Activated T-helper 2 cell treated with anti-CD3 and anti-CD28 coated beads, Interferon-gamma antibody, Interleukin-2, Interleukin-4, amounts not matched to agents 10 μg/mL and 5 μg/mL and 100 μg/mL, durations not matched to agents 14 hours and 24 hours and 36 hours (primary cell): ENCODE measurements at regions of chr13 and their contacts with region 1.

Region 1: DNA sequence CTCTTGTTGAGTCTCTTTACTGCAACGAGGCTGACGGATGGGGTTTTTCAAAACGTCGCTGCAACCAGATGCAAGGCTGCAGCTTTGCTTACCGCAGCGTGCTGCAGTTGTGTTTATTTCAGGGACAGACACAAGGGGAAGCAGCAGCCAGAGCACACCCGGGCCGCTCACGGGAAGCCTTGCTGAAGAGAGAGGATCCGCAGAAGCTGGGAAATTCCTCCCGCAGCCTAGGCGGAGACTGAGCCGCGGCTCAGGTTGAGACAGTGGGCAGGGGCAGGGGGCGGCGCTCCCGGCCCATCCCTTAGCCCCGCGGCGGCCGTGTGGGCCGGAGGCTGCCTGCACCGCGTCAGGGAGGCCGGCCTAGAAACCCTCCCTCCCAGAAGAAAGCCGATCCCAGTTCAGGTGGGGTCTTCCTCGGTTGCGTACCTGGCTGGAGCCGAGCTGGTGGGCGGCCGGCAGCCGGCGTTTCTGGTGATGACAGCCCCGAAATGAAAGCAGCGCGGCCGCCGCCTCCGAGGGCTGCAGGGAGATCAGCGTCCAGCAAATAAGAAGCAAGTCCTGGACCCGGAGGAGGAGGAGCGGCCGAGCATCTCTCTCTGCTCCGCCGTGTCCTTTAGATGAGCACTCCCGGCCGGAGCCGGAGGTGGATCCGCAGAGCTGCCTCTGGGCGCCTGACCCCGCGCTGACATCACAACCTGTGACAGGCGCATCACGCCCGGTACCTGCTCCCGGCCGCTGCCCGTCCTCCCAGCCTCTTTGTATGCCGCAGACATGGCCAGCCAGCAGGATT is at the start of gene FRY:
- DNase-seq: peak; percentile 31
- H3K4me3 Mint-ChIP-seq: peak within 1 kb of the TSS; percentile 94
- H3K27ac Mint-ChIP-seq: peak within 1 kb of the TSS; percentile 89
- H3K4me1 Mint-ChIP-seq: peaks cover 49% of the 10 kb centered on the region
- H3K27me3 Mint-ChIP-seq: peaks cover 5% of the 10 kb centered on the region
- total RNA-seq, gene FRY: 3.7 and 7.4 TPM in 2 replicates

Region 2: DNA sequence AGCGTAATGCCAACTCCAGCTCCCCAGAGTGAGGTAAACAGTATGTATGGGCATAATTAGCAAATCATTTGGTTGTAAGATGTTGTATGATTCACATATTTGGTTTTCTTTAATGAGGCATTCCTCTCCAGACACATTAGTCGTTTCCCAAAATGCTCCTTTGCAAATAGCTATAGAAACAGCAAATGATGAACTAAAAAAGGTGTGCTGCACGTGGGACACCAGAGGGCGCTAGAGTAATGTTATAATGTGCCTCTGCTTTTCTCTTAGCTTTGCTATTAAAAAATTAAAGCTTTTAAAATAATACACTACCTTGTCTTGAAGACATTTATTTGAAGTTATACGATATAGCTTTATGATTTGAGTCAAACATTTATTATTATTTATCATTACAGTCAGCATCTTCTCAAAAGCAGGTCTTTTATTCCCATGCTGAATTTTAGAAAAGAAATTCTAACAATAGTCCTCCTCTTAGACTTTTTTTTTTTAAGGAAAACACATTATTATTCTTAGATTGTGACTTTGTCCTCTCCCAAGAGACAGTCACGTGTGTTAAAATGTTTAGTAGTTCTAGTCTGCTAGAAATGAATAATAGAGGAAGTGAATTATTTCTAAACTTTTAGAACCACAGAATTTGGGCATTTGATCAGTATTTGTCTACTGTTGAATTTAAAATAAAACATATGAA is 121.2 kb before region 1 on chr13:
- intact Hi-C with region 1: loop called (anchors 10 kb)
- DNase-seq: peak; percentile 38
- H3K4me3 Mint-ChIP-seq: no peak overlapping the region
- H3K27ac Mint-ChIP-seq: no peak overlapping the region
- H3K4me1 Mint-ChIP-seq: peaks cover 22% of the 10 kb centered on the region
- H3K27me3 Mint-ChIP-seq: peaks cover 23% of the 10 kb centered on the region

Region 3: DNA sequence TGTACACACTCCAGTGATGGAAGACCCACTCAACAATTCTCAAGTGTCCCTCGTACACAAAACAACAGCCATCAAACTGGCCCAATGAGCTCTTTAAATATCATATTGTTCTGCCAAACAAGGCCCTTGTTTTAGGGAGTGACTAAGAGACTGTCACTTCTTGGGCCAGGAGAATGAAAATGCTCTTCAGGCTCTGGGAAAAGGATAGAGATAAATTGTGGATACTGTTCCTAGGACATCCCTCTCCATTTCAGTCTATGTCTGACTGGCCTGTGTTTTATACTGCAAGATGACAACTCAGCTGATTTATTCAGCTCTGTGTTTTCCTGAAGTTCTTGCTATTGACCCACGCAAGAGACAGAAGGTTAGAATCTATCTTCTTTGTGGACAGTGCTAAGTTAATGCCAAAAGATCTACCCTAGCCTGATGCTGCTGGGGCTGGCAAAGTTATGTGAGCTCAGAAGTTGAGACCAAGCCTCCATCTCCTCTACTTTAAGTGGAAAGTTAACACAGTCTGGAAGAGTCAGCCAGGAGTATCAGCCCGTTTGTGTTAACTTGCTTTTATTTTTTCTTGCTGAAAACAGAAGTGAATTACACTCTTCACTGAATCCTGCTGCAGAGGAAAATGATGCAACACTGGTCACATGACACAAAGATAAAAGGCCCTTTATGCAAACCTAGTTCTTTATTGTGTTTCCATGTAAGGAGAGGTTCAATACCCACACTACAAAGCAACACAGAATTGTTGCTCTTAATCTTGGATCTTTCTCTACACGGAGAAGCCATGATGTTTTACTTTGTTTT is 15.0 kb after region 1 on chr13:
- intact Hi-C with region 1: loop called (anchors 2 kb)
- DNase-seq: no peak
- H3K4me3 Mint-ChIP-seq: peak overlapping the region; percentile 5
- H3K27ac Mint-ChIP-seq: peak overlapping the region; percentile 67
- H3K4me1 Mint-ChIP-seq: peaks cover 64% of the 10 kb centered on the region
- H3K27me3 Mint-ChIP-seq: no peaks in the 10 kb centered on the region

Region 4: DNA sequence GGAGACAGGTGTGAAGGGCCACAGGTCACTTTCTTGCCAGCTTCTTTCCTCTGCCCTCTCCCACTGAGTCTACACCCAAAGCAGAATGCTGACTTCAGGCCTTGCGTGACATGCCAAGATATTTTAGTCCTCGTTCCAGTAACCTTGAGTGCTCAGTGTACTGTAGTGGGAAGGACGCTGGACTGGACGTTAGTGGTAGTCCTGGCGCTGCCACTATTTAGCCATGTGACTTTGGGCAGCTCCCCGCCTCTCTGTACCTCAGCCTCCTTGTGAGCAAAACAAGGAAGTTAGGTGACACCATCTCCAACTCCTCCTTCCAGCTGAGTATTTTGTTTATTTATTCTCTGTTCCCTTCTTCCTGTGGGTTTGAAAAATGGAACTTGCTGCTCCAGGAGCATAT is 86.5 kb after region 1 on chr13:
- intact Hi-C with region 1: loop called (anchors 5 kb)
- DNase-seq: no peak
- H3K4me3 Mint-ChIP-seq: no peak overlapping the region
- H3K27ac Mint-ChIP-seq: no peak overlapping the region
- H3K4me1 Mint-ChIP-seq: peaks cover 40% of the 10 kb centered on the region
- H3K27me3 Mint-ChIP-seq: no peaks in the 10 kb centered on the region

Region 5: DNA sequence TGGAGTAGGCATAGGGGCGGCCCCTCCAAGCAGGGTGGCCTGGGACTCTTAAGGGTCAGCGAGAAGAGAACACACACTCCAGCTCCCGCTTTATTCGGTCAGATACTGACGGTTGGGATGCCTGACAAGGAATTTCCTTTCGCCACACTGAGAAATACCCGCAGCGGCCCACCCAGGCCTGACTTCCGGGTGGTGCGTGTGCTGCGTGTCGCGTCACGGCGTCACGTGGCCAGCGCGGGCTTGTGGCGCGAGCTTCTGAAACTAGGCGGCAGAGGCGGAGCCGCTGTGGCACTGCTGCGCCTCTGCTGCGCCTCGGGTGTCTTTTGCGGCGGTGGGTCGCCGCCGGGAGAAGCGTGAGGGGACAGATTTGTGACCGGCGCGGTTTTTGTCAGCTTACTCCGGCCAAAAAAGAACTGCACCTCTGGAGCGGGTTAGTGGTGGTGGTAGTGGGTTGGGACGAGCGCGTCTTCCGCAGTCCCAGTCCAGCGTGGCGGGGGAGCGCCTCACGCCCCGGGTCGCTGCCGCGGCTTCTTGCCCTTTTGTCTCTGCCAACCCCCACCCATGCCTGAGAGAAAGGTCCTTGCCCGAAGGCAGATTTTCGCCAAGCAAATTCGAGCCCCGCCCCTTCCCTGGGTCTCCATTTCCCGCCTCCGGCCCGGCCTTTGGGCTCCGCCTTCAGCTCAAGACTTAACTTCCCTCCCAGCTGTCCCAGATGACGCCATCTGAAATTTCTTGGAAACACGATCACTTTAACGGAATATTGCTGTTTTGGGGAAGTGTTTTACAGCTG is 284.2 kb after region 1 on chr13 and contains the starts of genes BRCA2 and ZAR1L:
- intact Hi-C with region 1: loop called (anchors 1 kb)
- DNase-seq: peak; percentile 85
- H3K4me3 Mint-ChIP-seq: peak within 1 kb of the TSS; percentile 96
- H3K27ac Mint-ChIP-seq: peak within 1 kb of the TSS; percentile 100
- H3K4me1 Mint-ChIP-seq: peaks cover 32% of the 10 kb centered on the region
- H3K27me3 Mint-ChIP-seq: no peaks in the 10 kb centered on the region
- total RNA-seq, gene BRCA2: 18.6 and 19.4 TPM in 2 replicates
- total RNA-seq, gene ZAR1L: not detected in 2 replicates

Region 6: GRCh38 chr13:32427852-32428580 is 396.8 kb after region 1 on chr13 and contains the start of gene N4BP2L1:
- intact Hi-C with region 1: loop called (anchors 5 kb)
- DNase-seq: peak; percentile 76
- H3K4me3 Mint-ChIP-seq: peak within 1 kb of the TSS; percentile 98
- H3K27ac Mint-ChIP-seq: peak within 1 kb of the TSS; percentile 100
- H3K4me1 Mint-ChIP-seq: peaks cover 39% of the 10 kb centered on the region
- H3K27me3 Mint-ChIP-seq: no peaks in the 10 kb centered on the region
- total RNA-seq, gene N4BP2L1: 26.1 and 28.6 TPM in 2 replicates

Region 7: DNA sequence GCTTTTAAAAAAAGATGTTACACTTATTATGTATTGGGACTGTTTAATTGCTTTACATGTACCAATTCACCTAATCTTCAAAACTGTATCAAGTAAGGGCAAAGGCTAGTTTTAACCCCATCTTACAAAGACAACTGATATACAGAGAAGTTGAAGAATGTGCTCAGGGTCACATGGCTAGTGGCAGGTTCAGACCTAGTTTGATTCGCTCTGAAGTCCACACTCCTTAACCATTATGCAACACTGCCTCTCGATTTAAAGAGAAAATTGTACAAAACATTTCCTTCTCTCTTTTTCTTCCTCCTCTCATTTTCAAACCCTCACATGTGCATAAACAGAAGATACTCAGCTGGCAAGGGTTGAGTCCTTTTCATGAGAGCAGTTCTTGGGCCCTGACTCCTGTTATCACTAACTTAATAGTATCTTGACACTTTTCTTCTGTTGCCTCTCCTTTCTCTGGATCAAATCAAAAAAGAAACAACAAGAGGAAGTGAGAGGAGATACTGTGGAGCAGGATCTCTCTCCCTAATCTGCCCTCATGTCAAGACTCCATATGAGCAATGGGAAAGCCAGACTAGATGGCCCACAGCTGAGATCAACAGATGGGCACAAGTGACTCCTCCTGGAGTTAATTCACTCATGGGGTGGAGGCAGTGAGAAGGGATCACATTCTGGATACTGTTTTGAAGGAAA is 415.7 kb after region 1 on chr13:
- intact Hi-C with region 1: no loop called
- DNase-seq: no peak
- H3K4me3 Mint-ChIP-seq: no peak overlapping the region
- H3K27ac Mint-ChIP-seq: no peak overlapping the region
- H3K4me1 Mint-ChIP-seq: peaks cover 19% of the 10 kb centered on the region
- H3K27me3 Mint-ChIP-seq: no peaks in the 10 kb centered on the region

Region 8: GRCh38 chr13:32538621-32539246 is 507.5 kb after region 1 on chr13 and contains the start of gene N4BP2L2:
- intact Hi-C with region 1: loop called (anchors 10 kb)
- DNase-seq: peak; percentile 88
- H3K4me3 Mint-ChIP-seq: peak within 1 kb of the TSS; percentile 93
- H3K27ac Mint-ChIP-seq: peak within 1 kb of the TSS; percentile 98
- H3K4me1 Mint-ChIP-seq: peaks cover 36% of the 10 kb centered on the region
- H3K27me3 Mint-ChIP-seq: no peaks in the 10 kb centered on the region
- total RNA-seq, gene N4BP2L2: 94.3 and 105 TPM in 2 replicates